ENCODE measurements at regions of chr1 and their contacts with region 1.

Region 1: DNA sequence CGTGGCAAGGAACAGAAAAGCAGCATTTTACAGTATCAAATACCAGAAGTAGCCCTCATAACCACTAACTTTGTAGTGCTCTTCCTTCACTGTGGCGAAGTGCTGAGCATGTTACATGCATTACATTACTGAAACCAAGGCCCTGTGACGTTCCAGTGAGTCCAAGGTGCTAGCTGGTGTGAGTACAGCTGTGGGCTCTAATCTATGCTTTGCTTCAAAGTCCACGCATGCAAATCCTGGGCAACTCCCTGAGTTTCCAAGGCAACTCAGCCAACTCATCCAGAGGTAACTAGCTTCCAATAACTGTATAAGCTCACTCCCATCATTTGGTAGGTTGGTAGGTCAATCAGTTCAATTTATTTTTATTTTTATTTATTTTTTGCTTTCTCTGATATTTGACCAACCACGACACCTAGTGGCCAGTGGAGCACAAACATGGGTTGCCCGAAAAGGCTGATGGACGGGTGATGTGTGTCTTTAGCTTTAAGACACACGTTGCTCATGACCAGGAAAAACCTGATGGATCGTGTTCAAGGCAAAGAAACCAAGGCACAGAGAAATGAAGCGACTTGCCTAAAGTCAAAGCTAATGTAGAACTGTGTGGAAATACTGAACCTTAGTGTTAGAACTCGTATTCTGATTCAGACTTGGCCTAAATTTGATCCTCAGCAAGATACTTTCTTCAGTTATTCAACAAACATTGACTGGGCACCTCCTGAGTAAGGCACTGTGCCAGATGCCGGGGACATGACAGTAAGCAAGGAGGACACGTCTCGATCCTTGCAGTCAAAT is 73.0 kb downstream of the GNG12 start:
- DNase-seq: no peak
- H3K4me3 ChIP-seq: no peak overlapping the region
- H3K27ac ChIP-seq: peak overlapping the region; percentile 19 to 64 (median 48)
- H3K4me1 ChIP-seq: peaks cover 17 to 63% (median 50%) of the 10 kb centered on the region in 4 donors
- H3K27me3 ChIP-seq: no peaks in the 10 kb centered on the region
- CTCF ChIP-seq: peak; percentile 87 to 90 (median 89)
- EP300 ChIP-seq: no peak
- POLR2A ChIP-seq: no peak

Region 2: GRCh38 chr1:67559222-67559700 is 201.0 kb before region 1 on chr1:
- intact Hi-C with region 1: loop called (anchors 2 kb)
- DNase-seq: no peak
- H3K4me3 ChIP-seq: peak overlapping the region in 2 of 4 donors; percentile 2 to 5
- H3K27ac ChIP-seq: peak overlapping the region; percentile 37 to 66 (median 46)
- H3K4me1 ChIP-seq: peaks cover 9 to 25% (median 21%) of the 10 kb centered on the region in 4 donors
- H3K27me3 ChIP-seq: no peaks in the 10 kb centered on the region
- CTCF ChIP-seq: no peak
- EP300 ChIP-seq: no peak
- POLR2A ChIP-seq: no peak

Region 3: DNA sequence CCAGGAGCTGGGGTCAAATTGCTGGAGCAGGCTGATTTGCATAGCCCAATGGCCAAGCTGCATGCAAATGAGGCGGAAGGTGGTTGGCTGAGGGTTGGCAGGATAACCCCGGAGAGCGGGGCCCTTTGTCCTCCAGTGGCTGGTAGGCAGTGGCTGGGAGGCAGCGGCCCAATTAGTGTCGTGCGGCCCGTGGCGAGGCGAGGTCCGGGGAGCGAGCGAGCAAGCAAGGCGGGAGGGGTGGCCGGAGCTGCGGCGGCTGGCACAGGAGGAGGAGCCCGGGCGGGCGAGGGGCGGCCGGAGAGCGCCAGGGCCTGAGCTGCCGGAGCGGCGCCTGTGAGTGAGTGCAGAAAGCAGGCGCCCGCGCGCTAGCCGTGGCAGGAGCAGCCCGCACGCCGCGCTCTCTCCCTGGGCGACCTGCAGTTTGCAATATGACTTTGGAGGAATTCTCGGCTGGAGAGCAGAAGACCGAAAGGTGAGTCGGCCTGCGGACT is 75.1 kb before region 1 on chr1 and contains the start of gene GADD45A:
- intact Hi-C with region 1: loop called (anchors 5 kb)
- DNase-seq: peak; percentile 100
- H3K4me3 ChIP-seq: peak within 1 kb of the TSS; percentile 82 to 95 (median 90)
- H3K27ac ChIP-seq: peak within 1 kb of the TSS; percentile 93 to 98 (median 96)
- H3K4me1 ChIP-seq: peaks cover 23 to 37% (median 35%) of the 10 kb centered on the region in 4 donors
- H3K27me3 ChIP-seq: no peaks in the 10 kb centered on the region
- CTCF ChIP-seq: peak in 1 of 3 experiments; percentile 1
- EP300 ChIP-seq: no peak
- POLR2A ChIP-seq: peak; percentile 91
- total RNA-seq, gene GADD45A: 51.1 to 80.8 (median 66.5) TPM

Region 4: DNA sequence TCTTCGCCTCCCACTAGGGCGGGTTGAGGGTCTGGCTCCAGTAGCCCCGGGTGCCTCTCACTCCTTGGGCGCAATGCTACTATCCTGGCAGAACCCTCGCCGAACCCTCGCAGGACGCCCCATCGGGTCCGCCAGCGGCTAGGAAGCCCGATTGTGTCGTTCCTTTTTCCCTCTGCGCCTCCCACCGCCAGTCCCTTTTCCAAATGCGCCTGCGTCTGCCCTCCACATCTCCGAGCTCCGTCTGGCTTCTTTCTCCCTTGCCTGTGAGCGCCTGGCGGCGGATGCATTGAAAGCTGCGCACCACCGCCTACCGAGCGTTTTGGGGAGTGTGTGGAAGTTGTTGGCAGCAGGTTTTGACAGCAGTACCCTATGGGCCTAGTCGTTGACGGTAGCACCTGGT is 291.2 kb after region 1 on chr1:
- intact Hi-C with region 1: loop called (anchors 10 kb)
- DNase-seq: no peak
- H3K4me3 ChIP-seq: peak overlapping the region; percentile 42 to 57 (median 48)
- H3K27ac ChIP-seq: no peak overlapping the region
- H3K4me1 ChIP-seq: peaks cover 0 to 9% (median 3%) of the 10 kb centered on the region in 4 donors
- H3K27me3 ChIP-seq: no peaks in the 10 kb centered on the region
- CTCF ChIP-seq: peak in 1 of 3 experiments; percentile 24
- EP300 ChIP-seq: no peak
- POLR2A ChIP-seq: no peak

Measured in esophagus muscularis mucosa (tissue), 4 donors.